ENCODE measurements at regions of chr19 and their contacts with region 1.

Region 1: DNA sequence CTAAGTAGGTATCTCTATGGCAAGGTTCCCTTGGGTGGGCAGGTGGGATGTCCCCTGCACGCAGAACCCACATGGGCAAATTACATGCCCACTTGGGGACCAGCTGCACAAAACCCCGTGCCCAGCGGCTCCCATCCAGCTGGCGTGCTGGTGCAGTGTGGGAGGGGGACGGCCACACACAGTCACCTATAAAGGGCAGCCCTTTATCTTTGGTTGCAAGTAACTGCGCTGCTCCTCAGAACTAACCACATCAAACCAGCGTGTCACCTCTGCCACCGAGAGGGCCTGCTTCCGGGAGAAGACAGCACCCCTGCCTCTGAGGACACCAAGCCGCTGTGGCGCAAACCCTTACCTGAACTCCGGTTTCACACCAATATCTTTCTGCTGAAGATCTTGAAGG is 32.2 kb downstream of the ANKRD27 start:
- DNase-seq: peak; percentile 73 to 81 (median 75)
- H3K4me3 ChIP-seq: peak overlapping the region in 1 of 2 donors; percentile 7
- H3K4me3 Mint-ChIP-seq: peak overlapping the region in 7 of 8 donors; percentile 51 to 80 (median 70)
- H3K27ac ChIP-seq: no peak overlapping the region
- H3K27ac Mint-ChIP-seq: peak overlapping the region; percentile 39 to 91 (median 88)
- H3K4me1 ChIP-seq: peaks cover 23% of the 10 kb centered on the region
- H3K4me1 Mint-ChIP-seq: peaks cover 14 to 42% (median 27%) of the 10 kb centered on the region in 4 donors
- H3K27me3 ChIP-seq: no peaks in the 10 kb centered on the region
- H3K27me3 Mint-ChIP-seq: no peaks in the 10 kb centered on the region

Region 2: GRCh38 chr19:32599736-32600157 is 43.0 kb before region 1 on chr19:
- CTCF ChIA-PET with region 1: interaction called, 5 read pairs
- POLR2A ChIA-PET with region 1: no interaction called
- intact Hi-C with region 1: loop called (anchors 5 kb)
- DNase-seq: peak; percentile 40 to 57 (median 53)
- H3K4me3 ChIP-seq: no peak overlapping the region
- H3K4me3 Mint-ChIP-seq: no peak overlapping the region
- H3K27ac ChIP-seq: no peak overlapping the region
- H3K27ac Mint-ChIP-seq: peak overlapping the region in 2 of 7 donors; percentile 14 to 19
- H3K4me1 ChIP-seq: no peaks in the 10 kb centered on the region
- H3K4me1 Mint-ChIP-seq: peaks cover 5 to 8% (median 7%) of the 10 kb centered on the region in 4 donors
- H3K27me3 ChIP-seq: no peaks in the 10 kb centered on the region
- H3K27me3 Mint-ChIP-seq: no peaks in the 10 kb centered on the region